CD4-positive, alpha-beta memory T cell (primary cell): ENCODE measurements at regions of chr17 and their contacts with region 1.

Region 1: DNA sequence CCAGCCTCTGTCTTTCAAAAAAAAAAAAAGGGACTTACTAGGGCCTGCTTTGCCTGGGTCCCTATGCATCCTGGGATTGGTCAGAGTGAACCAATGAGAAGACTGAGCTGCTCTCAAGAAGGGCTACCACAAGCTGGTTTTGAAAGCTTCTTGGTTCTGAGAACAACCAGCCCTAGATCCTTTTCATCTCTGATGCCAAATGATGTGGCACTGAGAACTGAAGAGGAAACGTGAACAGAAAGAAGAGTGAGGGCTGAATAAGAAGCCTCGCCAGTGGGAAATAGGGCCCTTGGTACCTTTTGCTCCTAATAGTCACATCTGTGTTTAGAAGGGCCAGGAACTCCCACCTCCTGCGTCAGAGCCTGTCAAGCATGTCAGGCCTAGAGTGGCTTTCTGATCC is 10.7 kb downstream of the TACO1 start:
- DNase-seq: peak in 4 of 5 donors; percentile 24 to 46 (median 39)
- H3K4me3 ChIP-seq: no peak overlapping the region
- H3K4me3 Mint-ChIP-seq: peak overlapping the region; percentile 9 to 80 (median 69)
- H3K27ac ChIP-seq: peak overlapping the region; percentile 46
- H3K27ac Mint-ChIP-seq: peak overlapping the region; percentile 62 to 99 (median 93)
- H3K4me1 ChIP-seq: peaks cover 36% of the 10 kb centered on the region
- H3K4me1 Mint-ChIP-seq: peaks cover 27 to 45% (median 32%) of the 10 kb centered on the region in 4 donors
- H3K27me3 ChIP-seq: no peaks in the 10 kb centered on the region
- H3K27me3 Mint-ChIP-seq: no peaks in the 10 kb centered on the region

Region 2: DNA sequence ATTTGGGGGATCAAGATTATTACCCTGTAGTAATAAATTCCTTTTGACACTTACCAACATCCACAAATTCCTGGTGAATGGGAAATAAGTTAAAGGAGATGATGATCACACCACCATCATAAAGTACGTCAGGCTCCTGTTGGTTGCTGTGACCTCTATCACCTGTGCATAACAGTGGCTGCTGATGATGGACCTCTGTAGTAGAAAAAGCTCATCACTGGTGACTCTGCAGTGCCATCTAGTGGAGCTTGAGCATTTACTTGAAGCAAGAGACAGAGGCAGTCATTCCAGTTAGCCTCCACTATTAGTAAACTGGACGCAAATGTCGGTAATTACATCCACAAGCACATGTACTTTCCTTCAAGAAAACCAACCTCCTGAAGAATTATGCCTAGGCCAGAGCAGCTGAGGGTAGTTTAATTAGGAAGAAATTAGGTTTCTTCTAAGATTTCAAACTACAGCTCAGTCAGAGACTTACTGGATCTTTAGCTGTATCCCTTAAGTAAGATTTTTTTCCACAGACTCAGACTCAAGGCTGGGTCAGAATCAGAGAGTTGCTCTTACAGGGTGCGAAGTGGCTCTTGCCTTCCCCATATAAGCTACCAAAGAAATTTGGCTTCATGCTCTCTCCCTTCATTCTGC is 204.5 kb before region 1 on chr17:
- CTCF ChIA-PET with region 1: interaction called, 35 read pairs
- POLR2A ChIA-PET with region 1: interaction called, 3 read pairs
- intact Hi-C with region 1: loop called (anchors 1 kb)
- DNase-seq: peak; percentile 65 to 76 (median 67)
- H3K4me3 ChIP-seq: no peak overlapping the region
- H3K4me3 Mint-ChIP-seq: no peak overlapping the region
- H3K27ac ChIP-seq: no peak overlapping the region
- H3K27ac Mint-ChIP-seq: peak overlapping the region in 5 of 7 donors; percentile 10 to 86 (median 81)
- H3K4me1 ChIP-seq: peaks cover 5% of the 10 kb centered on the region
- H3K4me1 Mint-ChIP-seq: peaks cover 2 to 9% (median 7%) of the 10 kb centered on the region in 4 donors
- H3K27me3 ChIP-seq: no peaks in the 10 kb centered on the region
- H3K27me3 Mint-ChIP-seq: no peaks in the 10 kb centered on the region

Region 3: DNA sequence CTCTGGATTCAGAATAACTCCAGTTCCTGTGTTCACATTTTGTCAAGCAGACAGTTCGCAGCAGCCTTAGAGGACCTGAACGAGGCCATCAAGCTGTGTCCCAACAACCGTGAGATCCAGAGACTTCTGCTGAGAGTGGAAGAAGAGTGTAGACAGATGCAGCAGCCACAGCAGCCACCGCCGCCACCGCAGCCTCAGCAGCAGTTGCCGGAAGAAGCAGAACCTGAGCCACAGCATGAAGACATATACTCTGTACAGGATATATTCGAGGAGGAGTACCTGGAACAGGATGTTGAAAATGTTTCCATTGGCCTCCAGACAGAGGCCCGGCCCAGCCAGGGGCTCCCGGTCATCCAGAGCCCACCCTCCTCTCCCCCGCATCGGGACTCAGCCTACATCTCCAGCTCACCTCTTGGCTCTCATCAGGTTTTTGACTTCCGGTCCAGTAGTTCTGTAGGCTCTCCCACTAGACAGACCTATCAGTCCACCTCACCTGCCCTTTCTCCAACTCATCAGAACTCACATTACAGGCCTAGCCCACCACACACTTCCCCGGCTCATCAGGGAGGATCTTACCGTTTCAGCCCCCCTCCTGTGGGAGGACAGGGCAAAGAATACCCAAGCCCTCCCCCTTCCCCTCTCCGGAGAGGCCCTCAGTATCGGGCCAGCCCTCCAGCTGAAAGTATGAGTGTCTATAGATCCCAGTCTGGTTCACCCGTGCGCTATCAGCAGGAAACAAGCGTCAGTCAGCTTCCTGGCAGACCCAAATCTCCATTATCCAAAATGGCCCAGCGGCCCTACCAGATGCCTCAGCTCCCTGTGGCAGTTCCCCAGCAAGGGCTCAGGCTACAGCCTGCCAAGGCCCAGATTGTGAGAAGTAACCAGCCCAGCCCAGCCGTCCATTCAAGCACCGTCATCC is 191.1 kb before region 1 on chr17:
- CTCF ChIA-PET with region 1: interaction called, 255 read pairs
- POLR2A ChIA-PET with region 1: interaction called, 64 read pairs
- intact Hi-C with region 1: loop called (anchors 1 kb)
- DNase-seq: peak; percentile 32 to 55 (median 42)
- H3K4me3 ChIP-seq: no peak overlapping the region
- H3K4me3 Mint-ChIP-seq: peak overlapping the region; percentile 41 to 68 (median 61)
- H3K27ac ChIP-seq: no peak overlapping the region
- H3K27ac Mint-ChIP-seq: peak overlapping the region; percentile 47 to 93 (median 85)
- H3K4me1 ChIP-seq: peaks cover 17% of the 10 kb centered on the region
- H3K4me1 Mint-ChIP-seq: peaks cover 7 to 22% (median 14%) of the 10 kb centered on the region in 4 donors
- H3K27me3 ChIP-seq: no peaks in the 10 kb centered on the region
- H3K27me3 Mint-ChIP-seq: no peaks in the 10 kb centered on the region

Region 4: GRCh38 chr17:63434876-63435684 is 176.3 kb before region 1 on chr17:
- CTCF ChIA-PET with region 1: interaction called, 255 read pairs
- POLR2A ChIA-PET with region 1: interaction called, 21 read pairs
- intact Hi-C with region 1: no loop called
- DNase-seq: peak; percentile 70 to 82 (median 76)
- H3K4me3 ChIP-seq: no peak overlapping the region
- H3K4me3 Mint-ChIP-seq: peak overlapping the region in 7 of 8 donors; percentile 48 to 79 (median 65)
- H3K27ac ChIP-seq: no peak overlapping the region
- H3K27ac Mint-ChIP-seq: peak overlapping the region; percentile 86 to 97 (median 92)
- H3K4me1 ChIP-seq: peaks cover 56% of the 10 kb centered on the region
- H3K4me1 Mint-ChIP-seq: peaks cover 15 to 70% (median 41%) of the 10 kb centered on the region in 4 donors
- H3K27me3 ChIP-seq: no peaks in the 10 kb centered on the region
- H3K27me3 Mint-ChIP-seq: no peaks in the 10 kb centered on the region

Region 5: GRCh38 chr17:63478791-63479494 is 132.4 kb before region 1 on chr17:
- CTCF ChIA-PET with region 1: interaction called, 96 read pairs
- POLR2A ChIA-PET with region 1: interaction called, 33 read pairs
- intact Hi-C with region 1: loop called (anchors 1 kb)
- DNase-seq: peak; percentile 76 to 83 (median 77)
- H3K4me3 ChIP-seq: no peak overlapping the region
- H3K4me3 Mint-ChIP-seq: peak overlapping the region; percentile 49 to 86 (median 70)
- H3K27ac ChIP-seq: no peak overlapping the region
- H3K27ac Mint-ChIP-seq: peak overlapping the region in 5 of 7 donors; percentile 32 to 75 (median 57)
- H3K4me1 ChIP-seq: peaks cover 27% of the 10 kb centered on the region
- H3K4me1 Mint-ChIP-seq: peaks cover 8 to 34% (median 16%) of the 10 kb centered on the region in 4 donors
- H3K27me3 ChIP-seq: peaks cover 8% of the 10 kb centered on the region
- H3K27me3 Mint-ChIP-seq: no peaks in the 10 kb centered on the region

Region 6: GRCh38 chr17:63600569-63601438 is 10.6 kb before region 1 on chr17 and contains the start of gene TACO1:
- CTCF ChIA-PET with region 1: interaction called, 44 read pairs
- POLR2A ChIA-PET with region 1: interaction called, 42 read pairs
- intact Hi-C with region 1: loop called (anchors 1 kb)
- DNase-seq: peak; percentile 65 to 71 (median 69)
- H3K4me3 ChIP-seq: peak within 1 kb of the TSS; percentile 59 to 69
- H3K4me3 Mint-ChIP-seq: peak within 1 kb of the TSS; percentile 90 to 98 (median 95)
- H3K27ac ChIP-seq: peak within 1 kb of the TSS; percentile 70
- H3K27ac Mint-ChIP-seq: peak within 1 kb of the TSS; percentile 91 to 97 (median 95)
- H3K4me1 ChIP-seq: peaks cover 55% of the 10 kb centered on the region
- H3K4me1 Mint-ChIP-seq: peaks cover 34 to 57% (median 42%) of the 10 kb centered on the region in 4 donors
- H3K27me3 ChIP-seq: no peaks in the 10 kb centered on the region
- H3K27me3 Mint-ChIP-seq: no peaks in the 10 kb centered on the region
- total RNA-seq, gene TACO1: 17.7 to 20.3 TPM

Region 7: DNA sequence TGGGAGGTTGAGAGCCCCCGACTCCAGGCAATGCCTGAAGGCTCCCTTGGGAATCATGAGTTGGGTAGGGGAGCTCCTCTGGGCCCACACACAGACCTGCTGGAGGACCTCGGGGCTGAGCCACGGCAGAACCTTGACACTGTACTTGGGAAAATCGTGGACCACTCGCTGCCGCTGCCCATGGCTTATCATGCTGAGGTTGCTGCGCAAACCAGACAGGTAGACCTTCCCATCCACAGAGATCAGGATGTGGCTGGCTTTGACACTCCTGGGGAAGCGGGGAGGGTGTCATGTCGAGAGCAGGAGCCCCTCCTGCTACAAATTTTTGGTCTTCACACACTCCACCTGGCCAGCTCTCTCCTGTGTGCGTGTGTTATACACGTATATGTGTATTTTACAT is 95.8 kb after region 1 on chr17:
- CTCF ChIA-PET with region 1: interaction called, 27 read pairs
- POLR2A ChIA-PET with region 1: interaction called, 11 read pairs
- intact Hi-C with region 1: no loop called
- DNase-seq: peak; percentile 33 to 70 (median 41)
- H3K4me3 ChIP-seq: peak overlapping the region; percentile 21 to 34
- H3K4me3 Mint-ChIP-seq: peak overlapping the region; percentile 77 to 89 (median 80)
- H3K27ac ChIP-seq: peak overlapping the region; percentile 51
- H3K27ac Mint-ChIP-seq: peak overlapping the region; percentile 85 to 100 (median 93)
- H3K4me1 ChIP-seq: peaks cover 88% of the 10 kb centered on the region
- H3K4me1 Mint-ChIP-seq: peaks cover 52 to 83% (median 73%) of the 10 kb centered on the region in 4 donors
- H3K27me3 ChIP-seq: no peaks in the 10 kb centered on the region
- H3K27me3 Mint-ChIP-seq: no peaks in the 10 kb centered on the region